Activated naive CD4-positive, alpha-beta T cell treated with anti-CD3 and anti-CD28 coated beads for 36 hours (primary cell): ENCODE measurements at regions of chr10 and their contacts with region 1.

Region 1: GRCh38 chr10:84537447-84537931 is 209.1 kb downstream of the CCSER2 start:
- DNase-seq: peak; percentile 45
- H3K4me3 Mint-ChIP-seq: no peak overlapping the region
- H3K27ac Mint-ChIP-seq: no peak overlapping the region
- H3K4me1 Mint-ChIP-seq: peaks cover 27% of the 10 kb centered on the region
- H3K27me3 Mint-ChIP-seq: peaks cover 16% of the 10 kb centered on the region

Region 2: DNA sequence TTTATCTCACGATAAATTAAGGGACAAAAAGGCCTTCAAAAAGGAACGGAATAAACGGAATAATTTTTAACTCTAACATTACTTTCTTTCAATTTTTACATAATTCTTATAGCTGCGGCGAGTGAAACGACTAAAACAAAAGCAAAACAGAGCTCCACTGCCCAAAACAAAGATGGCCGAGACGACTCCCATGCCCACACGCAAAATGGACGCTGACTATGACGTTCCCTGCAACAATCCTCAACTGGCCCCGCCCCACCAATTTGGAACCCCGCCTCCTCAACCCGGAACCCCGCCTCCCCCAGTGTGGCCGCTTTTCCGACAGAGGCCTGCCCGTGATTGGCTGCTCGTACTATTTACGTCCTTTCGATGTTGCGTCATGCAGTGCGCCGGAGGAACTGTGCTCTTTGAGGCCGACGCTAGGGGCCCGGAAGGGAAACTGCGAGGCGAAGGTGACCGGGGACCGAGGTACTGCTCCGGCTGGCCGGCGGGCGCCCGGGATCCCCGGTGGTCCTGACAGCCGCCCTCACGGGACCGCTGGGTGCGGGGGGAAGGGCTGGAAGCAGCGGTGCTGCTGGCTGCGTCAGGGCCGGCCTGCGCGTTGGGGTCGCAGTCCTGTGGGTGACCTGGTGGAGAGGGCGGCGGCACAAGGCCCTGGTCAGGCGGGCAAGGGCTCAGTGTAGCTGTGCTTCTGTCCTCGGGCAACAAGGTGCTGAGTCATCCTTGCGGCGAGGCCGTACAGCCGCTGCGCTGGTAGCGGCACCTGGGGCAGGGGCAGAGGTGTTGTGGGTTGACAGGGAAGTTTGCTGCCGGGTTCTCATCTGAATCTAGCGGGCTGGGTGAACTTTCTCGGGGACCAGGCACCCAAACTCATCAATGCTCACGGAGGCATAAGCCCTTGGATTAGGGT is 398.1 kb before region 1 on chr10 and contains the start of gene GHITM:
- CTCF ChIA-PET with region 1: no interaction called
- intact Hi-C with region 1: loop called (anchors 1 kb)
- DNase-seq: peak; percentile 100
- H3K4me3 Mint-ChIP-seq: peak within 1 kb of the TSS; percentile 95
- H3K27ac Mint-ChIP-seq: peak within 1 kb of the TSS; percentile 99
- H3K4me1 Mint-ChIP-seq: peaks cover 36% of the 10 kb centered on the region
- H3K27me3 Mint-ChIP-seq: no peaks in the 10 kb centered on the region
- total RNA-seq, gene GHITM: 281 TPM

Region 3: DNA sequence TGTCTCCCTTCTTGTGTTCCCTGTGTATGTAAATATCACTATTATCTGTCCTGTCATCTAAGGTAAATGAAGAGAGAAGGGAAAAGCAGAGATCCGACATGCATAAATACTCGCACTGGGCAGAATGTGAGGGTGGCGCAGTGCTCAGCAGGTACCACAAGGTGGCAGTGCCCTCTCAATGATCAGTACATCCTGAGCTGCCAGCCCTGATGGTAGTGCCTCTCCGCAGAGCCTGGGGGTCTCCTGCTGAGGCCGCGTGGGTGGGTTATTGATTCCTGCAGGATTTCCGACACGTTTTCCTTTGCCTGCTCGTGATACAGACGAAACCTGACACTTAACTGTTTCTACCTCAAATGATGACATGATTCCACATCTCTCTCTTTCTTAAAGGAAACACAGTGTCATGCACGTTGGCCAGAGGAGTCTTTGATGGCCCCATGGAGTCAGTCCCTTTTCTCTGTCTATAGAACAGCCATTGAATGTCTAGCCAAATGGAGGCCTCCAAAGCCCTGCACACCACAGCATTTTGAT is 272.8 kb before region 1 on chr10:
- CTCF ChIA-PET with region 1: interaction called, 261 read pairs
- intact Hi-C with region 1: loop called (anchors 1 kb)
- DNase-seq: peak; percentile 86
- H3K4me3 Mint-ChIP-seq: no peak overlapping the region
- H3K27ac Mint-ChIP-seq: no peak overlapping the region
- H3K4me1 Mint-ChIP-seq: peaks cover 29% of the 10 kb centered on the region
- H3K27me3 Mint-ChIP-seq: peaks cover 25% of the 10 kb centered on the region

Region 4: DNA sequence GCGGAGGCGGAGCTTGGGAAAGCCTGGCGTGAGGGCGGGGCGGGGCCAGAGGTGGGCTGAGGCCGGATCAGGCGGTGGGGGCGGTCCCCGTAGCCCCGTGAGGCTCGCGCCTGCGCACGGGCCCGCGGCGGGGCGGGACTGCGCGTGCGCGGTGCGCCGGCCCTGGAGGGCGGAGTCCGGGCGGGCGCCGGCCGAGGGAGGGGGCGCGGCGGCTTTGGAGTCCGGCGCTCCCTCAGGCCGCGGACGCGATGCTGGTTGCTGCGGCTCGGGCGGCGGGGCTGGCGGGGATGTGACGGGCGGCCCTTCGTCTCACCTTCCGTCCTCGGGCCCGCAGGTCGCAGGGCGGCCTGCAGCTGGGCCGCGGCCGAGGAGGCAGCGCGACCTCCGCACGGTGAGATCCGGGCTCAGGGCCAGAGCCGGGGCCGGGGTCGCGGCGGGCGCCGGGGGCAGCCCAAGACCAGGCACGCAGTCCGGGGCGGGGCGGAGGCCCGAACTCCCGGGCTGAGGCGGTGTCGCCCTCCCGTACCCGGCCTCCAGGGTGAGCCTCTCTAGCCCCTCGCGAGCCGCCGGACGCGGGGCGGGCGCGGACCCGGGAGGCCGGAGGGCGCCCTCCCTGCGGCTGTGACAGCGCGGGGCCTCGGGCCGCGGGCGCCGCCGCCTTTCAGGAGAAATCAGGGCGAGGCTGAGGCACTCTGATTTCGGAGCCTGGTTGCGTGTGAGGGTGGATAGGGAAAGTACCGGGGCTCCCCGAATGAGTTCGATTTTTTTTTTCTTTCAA is 208.9 kb before region 1 on chr10 and contains the start of gene CCSER2:
- CTCF ChIA-PET with region 1: interaction called, 7 read pairs
- intact Hi-C with region 1: loop called (anchors 1 kb)
- DNase-seq: peak; percentile 97
- H3K4me3 Mint-ChIP-seq: peak within 1 kb of the TSS; percentile 95
- H3K27ac Mint-ChIP-seq: peak within 1 kb of the TSS; percentile 96
- H3K4me1 Mint-ChIP-seq: peaks cover 26% of the 10 kb centered on the region
- H3K27me3 Mint-ChIP-seq: no peaks in the 10 kb centered on the region
- total RNA-seq, gene CCSER2: 78.0 to 81.8 TPM

Region 5: DNA sequence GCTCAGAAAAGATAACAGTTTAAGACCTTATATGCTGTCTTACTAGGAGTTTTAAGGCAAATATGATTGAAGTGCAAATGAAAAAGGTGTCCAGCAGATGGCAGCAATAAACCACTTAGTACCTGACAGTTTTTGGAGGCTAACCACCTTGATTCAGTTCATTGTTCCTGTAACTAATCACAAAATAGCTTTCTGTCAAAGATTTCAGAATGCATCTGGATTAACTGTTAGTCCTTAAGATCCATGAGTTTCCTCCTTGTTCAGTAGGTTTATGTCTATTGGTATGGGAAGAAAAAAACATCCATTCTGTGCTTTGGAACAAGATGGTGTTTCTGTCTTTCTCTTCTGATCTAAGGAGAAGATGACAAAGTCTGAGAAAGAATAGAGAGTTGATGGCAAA is 162.5 kb before region 1 on chr10:
- CTCF ChIA-PET with region 1: interaction called, 70 read pairs
- intact Hi-C with region 1: loop called (anchors 1 kb)
- DNase-seq: peak; percentile 70
- H3K4me3 Mint-ChIP-seq: no peak overlapping the region
- H3K27ac Mint-ChIP-seq: peak overlapping the region; percentile 30
- H3K4me1 Mint-ChIP-seq: peaks cover 45% of the 10 kb centered on the region
- H3K27me3 Mint-ChIP-seq: no peaks in the 10 kb centered on the region

Region 6: GRCh38 chr10:84473136-84473535 is 64.4 kb before region 1 on chr10:
- CTCF ChIA-PET with region 1: no interaction called
- intact Hi-C with region 1: no loop called
- DNase-seq: no peak
- H3K4me3 Mint-ChIP-seq: no peak overlapping the region
- H3K27ac Mint-ChIP-seq: no peak overlapping the region
- H3K4me1 Mint-ChIP-seq: no peaks in the 10 kb centered on the region
- H3K27me3 Mint-ChIP-seq: no peaks in the 10 kb centered on the region

Region 7: DNA sequence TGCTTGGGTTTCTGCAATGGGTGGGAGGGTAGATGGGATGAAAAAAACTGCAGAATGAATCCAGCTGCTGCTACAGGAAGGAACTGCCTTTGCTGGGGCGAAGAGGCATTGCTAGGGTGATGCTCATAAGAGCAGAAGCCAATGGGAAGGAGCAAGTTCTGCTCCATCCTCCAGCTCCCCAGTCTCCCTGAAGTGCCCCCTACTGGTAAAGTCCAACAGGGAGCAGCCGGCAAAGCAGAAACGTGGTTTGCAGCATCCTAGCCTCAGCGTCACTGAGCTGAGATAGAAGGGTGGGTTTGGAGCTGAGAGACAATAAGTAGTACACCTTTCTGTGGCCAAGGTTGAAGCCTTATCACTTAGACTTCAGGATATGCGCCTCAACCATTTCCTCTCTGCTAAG is 11.4 kb after region 1 on chr10:
- CTCF ChIA-PET with region 1: interaction called, 52 read pairs
- intact Hi-C with region 1: no loop called
- DNase-seq: peak; percentile 24
- H3K4me3 Mint-ChIP-seq: no peak overlapping the region
- H3K27ac Mint-ChIP-seq: no peak overlapping the region
- H3K4me1 Mint-ChIP-seq: no peaks in the 10 kb centered on the region
- H3K27me3 Mint-ChIP-seq: peaks cover 3% of the 10 kb centered on the region

Region 8: DNA sequence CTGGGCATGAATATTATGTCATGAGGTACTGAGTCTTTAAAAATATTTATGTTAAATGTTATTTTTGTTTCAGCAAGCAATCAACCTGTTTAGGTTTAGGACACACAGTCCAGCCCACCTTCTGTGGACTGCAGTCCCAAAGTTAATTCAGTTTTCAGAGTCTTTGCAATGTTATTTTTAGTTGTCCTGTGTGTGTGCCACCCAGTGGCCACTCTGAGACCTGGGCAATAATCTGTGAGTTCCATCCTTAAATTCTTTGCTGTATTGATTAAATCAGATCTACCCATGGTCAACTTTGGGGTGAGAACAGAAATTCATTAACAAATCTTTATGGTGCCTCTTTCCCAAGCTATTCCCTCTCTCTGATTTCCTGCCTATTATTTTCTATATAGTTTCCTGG is 206.0 kb after region 1 on chr10:
- CTCF ChIA-PET with region 1: no interaction called
- intact Hi-C with region 1: loop called (anchors 1 kb)
- DNase-seq: no peak
- H3K4me3 Mint-ChIP-seq: no peak overlapping the region
- H3K27ac Mint-ChIP-seq: no peak overlapping the region
- H3K4me1 Mint-ChIP-seq: no peaks in the 10 kb centered on the region
- H3K27me3 Mint-ChIP-seq: peaks cover 6% of the 10 kb centered on the region